ENCODE measurements at regions of chr19 and their contacts with region 1.

Region 1: DNA sequence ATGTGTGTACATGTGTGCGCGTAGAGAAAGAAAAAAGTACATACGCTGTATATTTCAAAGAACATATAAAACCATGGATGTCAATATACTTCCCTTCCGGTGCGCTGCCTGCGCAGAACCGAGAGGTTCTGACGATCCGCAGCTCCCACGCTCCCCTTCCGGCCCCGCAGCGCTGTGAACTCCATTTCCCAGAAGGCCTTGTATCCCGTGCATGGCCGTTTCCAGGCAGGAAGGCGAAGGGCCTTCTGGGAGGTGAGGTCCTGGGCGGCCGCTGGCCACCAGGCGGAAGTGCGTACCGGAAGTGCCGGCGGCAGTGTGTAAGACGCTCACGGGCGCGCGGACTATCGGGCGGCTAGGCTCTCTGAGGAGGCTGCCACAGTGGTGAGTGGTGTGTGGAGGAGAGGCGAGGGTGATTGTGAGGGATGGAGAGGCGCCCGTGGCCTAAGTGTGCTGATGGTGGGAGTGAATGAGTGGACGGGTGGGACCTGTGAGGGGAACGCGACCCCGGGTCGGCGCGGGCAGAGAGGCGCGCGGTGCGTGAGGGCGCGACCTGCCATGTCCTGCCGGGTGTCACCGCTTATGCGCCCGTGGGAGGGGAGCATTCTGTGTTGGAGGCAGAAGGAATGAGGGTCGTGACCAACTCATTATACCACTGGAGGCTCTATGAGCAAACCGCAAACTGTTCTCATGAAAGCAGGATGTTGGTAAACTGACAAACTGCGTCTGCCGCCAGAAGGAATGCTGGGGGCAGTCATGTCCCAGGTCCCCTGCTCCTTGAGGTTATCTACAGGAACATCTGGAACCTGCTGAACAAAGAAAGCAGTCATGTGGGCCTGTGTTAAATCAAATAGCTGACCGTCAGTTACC is at the start of gene ERVK3-1:
- DNase-seq: peak; percentile 98
- H3K4me3 Mint-ChIP-seq: peak within 1 kb of the TSS; percentile 90
- H3K27ac Mint-ChIP-seq: peak within 1 kb of the TSS; percentile 96
- H3K4me1 Mint-ChIP-seq: peaks cover 35% of the 10 kb centered on the region
- H3K27me3 Mint-ChIP-seq: no peaks in the 10 kb centered on the region
- total RNA-seq, gene ERVK3-1: 75.2 and 80.7 TPM in 2 replicates

Region 2: DNA sequence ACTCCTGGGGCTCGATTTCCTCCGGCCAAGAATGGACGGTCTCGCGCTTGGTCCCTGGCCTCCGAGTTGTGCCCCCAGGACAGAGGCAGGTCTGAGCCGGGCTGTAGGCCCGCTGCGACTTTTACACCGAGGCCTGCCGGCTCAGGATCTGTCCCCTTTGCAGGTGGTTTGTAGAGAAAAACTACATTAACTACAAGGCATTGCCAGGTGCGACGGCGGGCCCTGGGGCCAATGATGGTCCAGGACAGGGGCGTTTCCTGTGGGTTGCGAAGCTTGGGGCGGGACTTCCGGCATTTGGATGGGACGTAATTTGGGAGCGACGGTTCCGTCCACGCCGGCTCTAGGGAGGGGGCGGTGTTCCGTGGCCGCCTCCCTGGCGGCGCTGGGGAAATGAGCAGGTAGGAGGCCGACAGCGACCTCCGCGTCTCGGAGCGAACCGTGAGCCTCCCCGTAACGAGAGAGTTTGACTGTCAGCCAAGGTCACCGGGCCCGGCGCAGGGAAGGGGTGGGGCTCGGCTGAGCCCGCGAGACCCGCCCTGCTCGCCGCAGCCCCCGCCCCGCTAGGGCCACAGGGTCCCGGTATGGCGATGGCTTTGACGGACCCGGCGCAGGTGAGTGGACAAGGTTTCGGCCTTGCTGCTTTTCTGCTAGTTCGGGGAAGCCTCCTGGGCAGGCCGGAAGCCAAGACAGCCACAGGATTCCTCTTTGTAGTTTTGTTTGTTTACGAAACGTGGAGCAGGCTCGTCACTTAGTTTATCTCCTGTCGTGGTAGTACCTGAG is 1064.8 kb before region 1 on chr19 and contains the start of gene ZNF805:
- intact Hi-C with region 1: loop called (anchors 1 kb)
- DNase-seq: peak; percentile 98
- H3K4me3 Mint-ChIP-seq: peak within 1 kb of the TSS; percentile 87
- H3K27ac Mint-ChIP-seq: peak within 1 kb of the TSS; percentile 95
- H3K4me1 Mint-ChIP-seq: peaks cover 21% of the 10 kb centered on the region
- H3K27me3 Mint-ChIP-seq: peaks cover 2% of the 10 kb centered on the region
- total RNA-seq, gene ZNF805: 7.6 and 8.6 TPM in 2 replicates

Region 3: DNA sequence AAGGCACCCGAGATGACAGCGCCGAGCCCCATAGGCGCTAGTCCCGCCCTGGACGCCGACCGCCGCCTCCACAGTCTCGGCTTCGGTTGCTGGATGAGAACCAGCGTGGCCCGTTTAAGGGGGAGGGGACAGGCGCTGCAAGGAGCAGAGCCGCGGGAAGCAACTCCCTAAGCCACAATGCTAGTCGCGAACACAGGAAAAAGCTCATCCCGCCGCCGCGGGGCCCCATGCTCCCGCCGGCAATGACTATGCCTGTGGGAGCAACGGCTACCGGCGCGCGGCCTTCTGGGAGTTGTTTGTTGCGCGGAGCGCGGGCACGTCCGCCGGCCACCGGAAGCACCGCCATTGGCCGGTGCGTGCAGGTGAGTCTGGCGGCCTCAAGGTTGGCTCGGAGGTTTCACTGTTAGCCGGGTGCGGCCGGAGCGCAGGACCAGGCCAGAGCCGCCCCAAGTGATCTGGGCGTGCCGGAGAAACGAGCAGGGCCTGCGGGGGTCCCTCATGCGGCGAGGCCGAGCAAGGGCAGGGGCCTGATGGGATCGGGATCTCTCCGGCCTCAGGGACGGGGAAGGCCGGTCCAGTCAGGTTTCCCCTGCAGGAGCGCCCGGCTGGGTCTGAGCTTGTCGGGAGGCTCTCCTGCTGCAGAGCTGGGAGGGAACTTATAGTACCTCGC is 76.6 kb before region 1 on chr19 and contains the start of gene ZNF544:
- intact Hi-C with region 1: loop called (anchors 1 kb)
- DNase-seq: peak; percentile 89
- H3K4me3 Mint-ChIP-seq: peak within 1 kb of the TSS; percentile 95
- H3K27ac Mint-ChIP-seq: peak within 1 kb of the TSS; percentile 95
- H3K4me1 Mint-ChIP-seq: peaks cover 26% of the 10 kb centered on the region
- H3K27me3 Mint-ChIP-seq: no peaks in the 10 kb centered on the region
- total RNA-seq, gene ZNF544: 52.9 and 55.5 TPM in 2 replicates

Region 4: DNA sequence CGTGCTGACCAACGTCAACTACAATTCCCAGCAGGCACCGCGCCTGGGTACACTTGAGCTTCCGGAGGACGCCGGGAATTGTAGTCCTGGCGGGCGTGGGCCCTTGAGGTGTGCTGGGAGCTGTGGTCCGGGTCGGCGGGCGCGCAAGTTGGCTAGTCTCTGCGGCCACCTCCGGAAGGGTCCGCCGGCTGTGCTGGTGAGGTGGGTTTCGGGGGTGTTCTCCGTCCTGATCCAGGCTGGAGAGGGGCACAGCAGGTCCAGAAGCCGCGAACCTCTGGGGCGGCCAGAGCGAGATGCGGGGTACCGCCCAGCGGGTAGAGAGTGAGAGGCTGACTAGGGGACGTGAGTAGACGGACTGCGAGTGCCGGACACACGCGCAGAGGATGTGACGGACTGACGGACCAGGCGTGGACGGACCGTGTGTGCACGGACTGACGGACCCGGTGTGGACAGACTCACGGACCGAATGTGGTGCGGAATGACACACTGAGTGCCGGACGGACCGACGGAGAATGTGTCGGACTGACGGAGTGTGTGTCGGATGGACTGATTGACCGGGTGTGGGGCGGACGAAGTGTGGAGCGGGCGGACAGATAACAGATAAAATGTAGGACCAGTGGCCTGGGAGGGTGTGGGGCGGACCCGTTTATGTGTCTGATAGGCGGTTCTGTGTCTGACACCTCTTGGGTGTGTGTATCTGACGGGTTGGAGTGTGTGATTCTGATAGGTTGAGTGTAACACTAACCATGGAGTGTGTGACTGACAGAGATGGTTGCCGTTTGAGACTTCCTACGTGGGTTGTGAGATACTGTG is 21.8 kb after region 1 on chr19 and contains the start of gene ZSCAN22:
- intact Hi-C with region 1: loop called (anchors 1 kb)
- DNase-seq: peak; percentile 97
- H3K4me3 Mint-ChIP-seq: no peak within 1 kb of the TSS
- H3K27ac Mint-ChIP-seq: no peak within 1 kb of the TSS
- H3K4me1 Mint-ChIP-seq: peaks cover 5% of the 10 kb centered on the region
- H3K27me3 Mint-ChIP-seq: no peaks in the 10 kb centered on the region
- total RNA-seq, gene ZSCAN22: 4.2 and 4.6 TPM in 2 replicates

Region 5: GRCh38 chr19:58408152-58409009 is 103.1 kb after region 1 on chr19 and contains the start of gene ZNF584:
- intact Hi-C with region 1: loop called (anchors 5 kb)
- DNase-seq: peak; percentile 98
- H3K4me3 Mint-ChIP-seq: peak within 1 kb of the TSS; percentile 88
- H3K27ac Mint-ChIP-seq: peak within 1 kb of the TSS; percentile 92
- H3K4me1 Mint-ChIP-seq: peaks cover 32% of the 10 kb centered on the region
- H3K27me3 Mint-ChIP-seq: no peaks in the 10 kb centered on the region
- total RNA-seq, gene ZNF584: 17.4 and 17.7 TPM in 2 replicates

Region 6: GRCh38 chr19:58475714-58476497 is 170.6 kb after region 1 on chr19 and contains the start of gene ZNF446:
- intact Hi-C with region 1: loop called (anchors 1 kb)
- DNase-seq: peak; percentile 99
- H3K4me3 Mint-ChIP-seq: peak within 1 kb of the TSS; percentile 93
- H3K27ac Mint-ChIP-seq: peak within 1 kb of the TSS; percentile 97
- H3K4me1 Mint-ChIP-seq: peaks cover 19% of the 10 kb centered on the region
- H3K27me3 Mint-ChIP-seq: no peaks in the 10 kb centered on the region
- total RNA-seq, gene ZNF446: 6.3 and 6.8 TPM in 2 replicates

Region 7: GRCh38 chr19:58543826-58544590 is 238.7 kb after region 1 on chr19 and contains the start of gene TRIM28:
- intact Hi-C with region 1: no loop called
- DNase-seq: peak; percentile 100
- H3K4me3 Mint-ChIP-seq: peak within 1 kb of the TSS; percentile 94
- H3K27ac Mint-ChIP-seq: peak within 1 kb of the TSS; percentile 99
- H3K4me1 Mint-ChIP-seq: peaks cover 29% of the 10 kb centered on the region
- H3K27me3 Mint-ChIP-seq: peaks cover 23% of the 10 kb centered on the region
- total RNA-seq, gene TRIM28: 689 and 698 TPM in 2 replicates

Measured in activated CD4-positive, alpha-beta T cell treated with anti-CD3 and anti-CD28 coated beads, Interleukin-2, amount 10 ng/mL, durations not matched to agents 24 days and 14 days (primary cell).